ENCODE measurements at regions of chr3 and their contacts with region 1.

Region 1: GRCh38 chr3:127455541-127456450 is 134.7 kb downstream of the TPRA1 start:
- DNase-seq: peak; percentile 91

Region 2: DNA sequence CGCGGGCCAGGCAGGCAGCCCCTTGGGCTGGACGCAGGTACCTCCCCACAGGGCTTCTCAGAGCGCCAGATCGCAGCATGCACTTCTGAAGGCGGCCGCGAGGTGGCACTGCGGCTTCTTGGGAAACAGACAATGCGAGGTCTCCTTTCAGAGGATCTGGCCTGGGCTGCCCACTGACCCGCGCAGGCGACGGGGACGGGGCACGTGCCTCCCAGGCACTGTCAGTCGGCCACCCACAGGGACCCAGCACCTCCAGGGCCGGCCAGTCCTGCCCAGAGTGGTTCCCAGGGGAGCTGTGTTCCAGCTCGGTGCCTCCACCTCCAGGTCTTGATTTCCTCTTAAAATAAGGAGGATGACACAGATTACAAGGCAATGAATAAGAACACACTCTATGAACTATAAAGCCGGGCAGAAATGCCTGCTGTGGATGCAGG is 776.5 kb before region 1 on chr3:
- intact Hi-C with region 1: loop called (anchors 5 kb)
- DNase-seq: peak; percentile 94

Region 3: GRCh38 chr3:126752303-126752842 is 703.4 kb before region 1 on chr3:
- intact Hi-C with region 1: loop called in 1 of 2 experiments (anchors 5 kb)
- DNase-seq: peak; percentile 93

Region 4: DNA sequence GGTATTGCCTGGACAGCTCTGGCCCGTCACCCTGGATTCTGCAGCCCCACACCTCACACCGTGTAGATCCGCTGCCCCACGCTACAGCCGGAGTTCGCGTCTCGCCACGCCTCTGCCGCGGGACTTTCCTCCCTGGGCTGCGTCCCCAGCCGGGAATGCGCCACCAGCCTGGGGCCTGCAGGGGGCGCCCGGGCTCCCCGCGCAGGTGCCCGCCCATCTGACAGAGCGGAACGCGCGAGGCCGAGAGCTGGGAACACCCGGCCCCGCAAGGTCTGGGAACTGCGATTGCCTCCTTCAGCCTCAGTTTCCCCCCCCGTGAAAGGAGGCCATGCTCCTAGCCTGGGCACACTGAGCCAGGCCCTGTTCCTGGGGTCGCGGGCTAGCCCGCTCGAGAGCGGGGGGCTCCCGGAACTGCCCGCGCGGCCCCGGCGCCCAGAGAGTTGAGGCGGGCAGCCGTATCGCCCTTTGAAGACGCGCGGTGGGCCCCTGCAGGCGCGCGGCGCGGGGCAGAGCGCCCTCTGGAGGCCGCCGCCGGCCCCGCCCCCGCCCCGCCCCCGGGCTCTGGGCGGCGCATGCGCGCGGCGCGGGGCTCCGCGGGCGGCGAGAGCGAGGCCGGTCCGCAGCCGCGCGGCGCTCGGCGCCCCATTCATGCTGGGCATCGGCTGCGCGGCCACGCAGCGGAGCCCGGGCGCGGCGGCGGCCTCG is 473.2 kb before region 1 on chr3 and contains the start of gene PLXNA1:
- intact Hi-C with region 1: loop called in 1 of 2 experiments (anchors 5 kb)
- DNase-seq: peak; percentile 95
- total RNA-seq, gene PLXNA1: 31.7 to 38.5 TPM

Region 5: GRCh38 chr3:127002195-127003174 is 453.3 kb before region 1 on chr3:
- intact Hi-C with region 1: loop called in 1 of 2 experiments (anchors 5 kb)
- DNase-seq: peak; percentile 97

Measured in posterior vena cava (tissue), 2 donors.